GM18951 (cell line): ENCODE measurements at regions of chr10 and their contacts with region 1.

Region 1: DNA sequence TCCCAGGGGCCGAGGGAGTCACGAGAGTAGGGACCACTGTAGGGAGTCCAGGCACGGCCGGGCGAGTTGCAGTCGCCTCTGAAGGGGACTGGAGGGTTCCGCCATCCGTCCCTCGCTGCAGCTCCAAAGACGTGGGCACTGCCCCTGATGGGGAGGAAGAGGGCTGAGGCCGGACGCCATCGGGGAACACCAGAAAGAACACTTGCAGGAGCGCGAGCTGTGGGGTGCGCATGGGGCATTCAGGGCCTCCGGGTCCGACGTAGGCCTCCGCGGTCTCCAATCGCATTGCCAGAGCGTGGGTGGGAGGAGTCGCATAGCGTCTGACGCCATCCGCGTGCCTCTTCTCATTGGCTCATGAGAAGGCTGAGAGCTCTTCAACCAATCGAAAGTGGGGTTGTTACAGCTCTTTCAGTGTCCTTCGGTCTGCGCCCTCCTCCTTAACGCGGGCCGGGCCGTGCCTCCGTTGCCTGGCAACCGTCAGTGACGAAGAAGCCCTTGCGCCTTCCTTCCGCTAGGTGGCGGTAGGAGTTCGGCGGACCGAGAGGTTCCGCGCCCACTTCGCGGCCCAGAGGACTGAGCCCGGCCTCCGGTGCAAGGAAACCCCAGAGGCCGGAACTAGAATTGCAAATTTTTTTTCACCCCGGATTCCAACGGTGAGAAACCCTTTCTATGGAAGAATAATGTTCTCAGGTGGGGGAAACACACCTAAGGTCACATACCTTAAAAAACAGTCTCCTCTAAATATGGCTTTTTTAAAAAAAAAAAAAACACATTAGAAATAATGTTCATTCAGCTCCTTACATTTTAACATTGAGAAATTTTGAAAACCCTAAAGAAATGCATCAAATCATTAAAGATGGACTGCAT is at the start of gene TCTN3:
- POLR2A ChIP-seq: peak; percentile 75

Region 2: GRCh38 chr10:95841661-95842498 is 148.0 kb after region 1 on chr10:
- in situ Hi-C with region 1: loop called (anchors 5 kb)
- POLR2A ChIP-seq: no peak

Region 3: DNA sequence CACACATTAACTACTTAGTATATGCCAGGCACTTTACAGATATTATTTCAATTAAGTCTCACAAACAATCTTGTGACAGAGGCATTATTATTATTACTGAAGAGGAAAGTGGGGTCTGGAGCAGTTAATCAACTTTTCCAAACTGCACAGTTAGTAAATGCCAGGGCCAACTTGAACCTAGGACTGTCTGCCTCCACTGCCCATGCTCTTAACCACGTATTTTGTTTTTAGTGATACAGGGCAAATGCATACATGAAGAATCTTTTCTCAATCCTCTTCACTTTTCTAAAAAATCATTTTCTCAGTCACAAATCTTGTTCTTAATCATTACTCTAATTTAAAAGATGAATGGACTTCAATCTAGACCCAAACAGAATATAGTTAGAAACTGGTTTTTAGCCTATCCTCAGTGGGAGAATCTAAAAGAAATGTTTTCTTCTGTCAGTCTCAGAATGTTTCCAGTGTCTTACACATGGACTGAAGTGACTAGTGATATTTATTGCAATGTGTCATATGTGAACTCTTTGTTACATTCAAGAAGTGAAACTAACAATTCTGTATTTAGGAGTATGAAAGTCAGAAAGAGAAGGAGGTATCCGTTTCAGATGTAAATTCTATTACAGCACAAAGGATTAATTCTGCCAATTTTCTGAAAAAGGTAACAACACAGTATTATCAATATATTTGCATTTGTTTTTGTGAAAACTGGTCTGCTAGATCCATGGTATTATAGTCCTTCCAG is 294.0 kb after region 1 on chr10:
- in situ Hi-C with region 1: loop called (anchors 25 kb)
- POLR2A ChIP-seq: no peak